A673 (cell line): ENCODE measurements at regions of chr17 and their contacts with region 1.

Region 1: GRCh38 chr17:21457051-21458026 is 81.2 kb downstream of the KCNJ12 start:
- DNase-seq: peak; percentile 87
- H3K4me3 ChIP-seq: no peak overlapping the region
- H3K27ac ChIP-seq: no peak overlapping the region
- H3K4me1 ChIP-seq: no peaks in the 10 kb centered on the region
- H3K27me3 ChIP-seq: peaks cover 3% of the 10 kb centered on the region
- CTCF ChIP-seq: peak; percentile 89

Region 2: GRCh38 chr17:20960871-20961270 is 496.5 kb before region 1 on chr17:
- CTCF ChIA-PET with region 1: no interaction called
- POLR2A ChIA-PET with region 1: interaction called, 11 read pairs
- intact Hi-C with region 1: no loop called
- DNase-seq: no peak
- H3K4me3 ChIP-seq: no peak overlapping the region
- H3K27ac ChIP-seq: no peak overlapping the region
- H3K4me1 ChIP-seq: no peaks in the 10 kb centered on the region
- H3K27me3 ChIP-seq: no peaks in the 10 kb centered on the region
- CTCF ChIP-seq: no peak

Region 3: GRCh38 chr17:21199299-21199698 is 258.0 kb before region 1 on chr17:
- CTCF ChIA-PET with region 1: no interaction called
- POLR2A ChIA-PET with region 1: no interaction called
- intact Hi-C with region 1: no loop called
- DNase-seq: no peak
- H3K4me3 ChIP-seq: no peak overlapping the region
- H3K27ac ChIP-seq: no peak overlapping the region
- H3K4me1 ChIP-seq: no peaks in the 10 kb centered on the region
- H3K27me3 ChIP-seq: no peaks in the 10 kb centered on the region
- CTCF ChIP-seq: no peak

Region 4: GRCh38 chr17:21284319-21285163 is 172.8 kb before region 1 on chr17 and contains the start of gene MAP2K3:
- CTCF ChIA-PET with region 1: interaction called, 3 read pairs
- POLR2A ChIA-PET with region 1: no interaction called
- intact Hi-C with region 1: loop called (anchors 5 kb)
- DNase-seq: peak; percentile 99
- H3K4me3 ChIP-seq: peak within 1 kb of the TSS; percentile 88
- H3K27ac ChIP-seq: peak within 1 kb of the TSS; percentile 94
- H3K4me1 ChIP-seq: peaks cover 36% of the 10 kb centered on the region
- H3K27me3 ChIP-seq: no peaks in the 10 kb centered on the region
- CTCF ChIP-seq: no peak
- total RNA-seq, gene MAP2K3: 39.0 and 44.0 TPM in 2 replicates

Region 5: DNA sequence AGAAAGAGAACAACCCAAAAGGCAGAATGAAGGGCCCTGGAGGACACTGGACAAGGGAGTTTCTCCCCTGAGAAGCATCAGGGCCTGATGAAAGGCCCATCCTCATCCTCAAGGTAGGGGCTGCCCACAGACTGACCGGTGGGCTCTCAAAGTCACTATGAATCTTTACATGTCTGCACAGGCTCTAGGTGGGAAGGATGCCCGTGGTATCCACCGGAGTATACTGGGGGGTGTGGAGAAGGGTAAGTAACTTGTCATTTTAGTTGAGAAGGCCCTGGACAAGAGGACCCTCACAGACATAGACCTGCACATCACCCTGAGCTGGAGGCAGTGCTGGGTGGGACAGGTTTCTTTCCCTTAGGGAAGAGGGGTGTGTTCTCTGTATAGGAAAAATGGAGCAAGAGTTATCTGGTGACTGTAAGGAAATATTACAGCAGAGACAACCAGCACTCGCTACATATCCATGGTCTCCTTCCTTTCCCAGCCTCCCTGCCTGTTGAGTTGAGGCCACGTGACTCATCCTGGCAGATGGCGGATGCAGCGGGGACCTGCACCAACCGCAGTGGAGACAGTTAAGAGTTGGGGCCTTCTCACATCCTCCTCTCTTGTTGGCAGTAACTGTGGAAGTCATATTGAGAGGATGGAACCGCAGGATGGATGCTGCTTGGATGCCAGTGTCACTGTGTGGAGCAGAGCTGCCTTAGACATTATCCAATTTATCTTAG is 126.7 kb before region 1 on chr17:
- CTCF ChIA-PET with region 1: interaction called, 11 read pairs
- POLR2A ChIA-PET with region 1: no interaction called
- intact Hi-C with region 1: no loop called
- DNase-seq: no peak
- H3K4me3 ChIP-seq: no peak overlapping the region
- H3K27ac ChIP-seq: no peak overlapping the region
- H3K4me1 ChIP-seq: no peaks in the 10 kb centered on the region
- H3K27me3 ChIP-seq: peaks cover under 1% of the 10 kb centered on the region
- CTCF ChIP-seq: no peak

Region 6: GRCh38 chr17:21345236-21345635 is 112.1 kb before region 1 on chr17:
- CTCF ChIA-PET with region 1: interaction called, 15 read pairs
- POLR2A ChIA-PET with region 1: no interaction called
- intact Hi-C with region 1: no loop called
- DNase-seq: no peak
- H3K4me3 ChIP-seq: no peak overlapping the region
- H3K27ac ChIP-seq: no peak overlapping the region
- H3K4me1 ChIP-seq: no peaks in the 10 kb centered on the region
- H3K27me3 ChIP-seq: no peaks in the 10 kb centered on the region
- CTCF ChIP-seq: no peak

Region 7: GRCh38 chr17:21495281-21495680 is 37.9 kb after region 1 on chr17:
- CTCF ChIA-PET with region 1: no interaction called
- POLR2A ChIA-PET with region 1: no interaction called
- intact Hi-C with region 1: no loop called
- DNase-seq: no peak
- H3K4me3 ChIP-seq: no peak overlapping the region
- H3K27ac ChIP-seq: no peak overlapping the region
- H3K4me1 ChIP-seq: no peaks in the 10 kb centered on the region
- H3K27me3 ChIP-seq: peaks cover 4% of the 10 kb centered on the region
- CTCF ChIP-seq: no peak

Region 8: GRCh38 chr17:21511363-21512198 is 54.2 kb after region 1 on chr17:
- CTCF ChIA-PET with region 1: interaction called, 15 read pairs
- POLR2A ChIA-PET with region 1: no interaction called
- intact Hi-C with region 1: loop called (anchors 2 kb)
- DNase-seq: peak; percentile 87
- H3K4me3 ChIP-seq: peak overlapping the region; percentile 51
- H3K27ac ChIP-seq: no peak overlapping the region
- H3K4me1 ChIP-seq: no peaks in the 10 kb centered on the region
- H3K27me3 ChIP-seq: no peaks in the 10 kb centered on the region
- CTCF ChIP-seq: peak; percentile 78

Region 9: DNA sequence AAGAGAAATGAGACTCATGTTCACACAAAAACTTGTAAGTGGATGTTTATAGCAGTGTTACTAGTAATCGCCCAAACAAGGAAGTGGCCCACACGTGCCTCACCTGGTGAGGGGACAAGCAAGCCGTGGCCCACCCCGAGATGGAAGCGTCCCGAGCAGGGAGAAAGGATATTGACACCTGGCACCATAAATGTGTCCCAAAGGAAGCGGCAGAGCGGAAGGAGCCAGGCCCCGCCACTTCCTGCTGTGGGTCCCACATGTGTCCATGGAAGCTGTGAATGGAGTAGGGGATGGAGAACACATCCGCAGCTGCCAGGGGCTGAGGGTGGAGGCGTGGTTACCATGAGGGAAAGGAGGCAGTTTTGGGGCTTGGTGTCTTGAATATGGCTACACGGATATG is 253.8 kb after region 1 on chr17:
- CTCF ChIA-PET with region 1: interaction called, 21 read pairs
- POLR2A ChIA-PET with region 1: no interaction called
- intact Hi-C with region 1: no loop called
- DNase-seq: no peak
- H3K4me3 ChIP-seq: no peak overlapping the region
- H3K27ac ChIP-seq: no peak overlapping the region
- H3K4me1 ChIP-seq: no peaks in the 10 kb centered on the region
- H3K27me3 ChIP-seq: no peaks in the 10 kb centered on the region
- CTCF ChIP-seq: no peak